ENCODE measurements at regions of chr4 and their contacts with region 1.

Region 1: GRCh38 chr4:137994871-137995270 is 247.3 kb downstream of the SLC7A11 start:
- DNase-seq: no peak
- H3K4me3 ChIP-seq: no peak overlapping the region
- H3K27ac ChIP-seq: no peak overlapping the region
- H3K4me1 ChIP-seq: no peaks in the 10 kb centered on the region
- H3K27me3 ChIP-seq: no peaks in the 10 kb centered on the region
- CTCF ChIP-seq: no peak

Region 2: GRCh38 chr4:137851435-137851834 is 143.4 kb before region 1 on chr4:
- CTCF ChIA-PET with region 1: no interaction called
- POLR2A ChIA-PET with region 1: no interaction called
- intact Hi-C with region 1: no loop called
- DNase-seq: no peak
- H3K4me3 ChIP-seq: no peak overlapping the region
- H3K27ac ChIP-seq: no peak overlapping the region
- H3K4me1 ChIP-seq: no peaks in the 10 kb centered on the region
- H3K27me3 ChIP-seq: no peaks in the 10 kb centered on the region
- CTCF ChIP-seq: no peak

Region 3: DNA sequence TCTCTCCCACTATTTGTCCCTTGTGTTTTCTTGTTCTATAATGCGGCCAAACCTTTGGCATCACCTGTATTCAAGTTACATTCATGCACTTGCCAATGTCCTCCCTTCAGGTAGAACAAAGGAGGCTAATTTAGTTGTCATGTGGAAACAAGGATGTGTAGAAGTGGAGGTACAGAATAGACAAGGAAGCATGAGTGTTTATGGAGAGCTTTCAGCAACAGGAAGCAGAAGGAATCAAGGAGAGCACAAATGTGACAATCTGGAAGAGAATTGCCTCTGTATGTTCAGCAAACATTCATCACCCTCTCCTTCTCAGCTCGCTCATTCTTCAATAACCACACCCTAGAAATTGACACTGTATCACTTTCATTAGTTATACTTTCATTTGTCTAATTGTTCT is 143.9 kb after region 1 on chr4:
- CTCF ChIA-PET with region 1: no interaction called
- POLR2A ChIA-PET with region 1: no interaction called
- intact Hi-C with region 1: no loop called
- DNase-seq: no peak
- H3K4me3 ChIP-seq: no peak overlapping the region
- H3K27ac ChIP-seq: no peak overlapping the region
- H3K4me1 ChIP-seq: no peaks in the 10 kb centered on the region
- H3K27me3 ChIP-seq: no peaks in the 10 kb centered on the region
- CTCF ChIP-seq: no peak

Region 4: DNA sequence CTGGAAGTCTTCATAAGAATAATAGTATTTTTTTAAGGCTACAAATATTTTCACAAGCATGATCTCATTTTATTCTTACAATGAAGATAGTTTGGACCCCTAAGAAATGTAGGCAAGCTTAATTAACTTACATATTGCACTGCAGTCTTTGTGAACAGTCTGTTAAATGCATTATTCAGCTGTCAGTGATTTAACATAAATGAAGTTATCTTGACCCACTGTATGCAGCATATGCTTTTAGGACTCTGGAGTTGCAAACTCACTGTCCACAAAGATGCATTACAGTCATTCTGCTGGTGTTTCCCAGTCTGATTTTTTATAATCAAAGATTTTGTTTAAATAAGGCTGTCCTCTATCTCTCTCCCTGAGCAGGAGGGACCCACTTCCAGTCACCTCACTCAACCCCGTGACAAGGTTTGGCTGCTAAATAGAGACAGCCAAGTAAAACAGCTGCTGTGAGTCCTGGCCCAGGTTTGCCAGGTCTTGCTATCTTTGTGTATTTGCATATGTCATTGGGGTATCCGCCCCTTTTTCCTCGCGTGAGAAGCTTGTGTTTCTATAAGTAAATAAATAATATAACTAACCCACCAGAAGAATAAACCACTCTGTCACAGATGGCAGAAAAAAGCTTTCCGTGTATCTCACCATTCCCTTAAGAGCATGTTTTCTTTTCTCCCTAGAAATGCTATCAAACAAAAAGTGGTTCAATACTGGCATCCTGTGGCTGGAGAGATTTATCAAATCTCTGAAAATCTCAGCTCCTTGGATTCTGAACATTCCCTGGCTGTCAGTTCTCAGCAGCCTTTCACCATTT is 180.3 kb after region 1 on chr4:
- CTCF ChIA-PET with region 1: no interaction called
- POLR2A ChIA-PET with region 1: interaction called, 18 read pairs
- intact Hi-C with region 1: no loop called
- DNase-seq: no peak
- H3K4me3 ChIP-seq: no peak overlapping the region
- H3K27ac ChIP-seq: no peak overlapping the region
- H3K4me1 ChIP-seq: no peaks in the 10 kb centered on the region
- H3K27me3 ChIP-seq: no peaks in the 10 kb centered on the region
- CTCF ChIP-seq: no peak